CD8-positive, alpha-beta T cell (primary cell): ENCODE measurements at regions of chr9 and their contacts with region 1.

Region 1: DNA sequence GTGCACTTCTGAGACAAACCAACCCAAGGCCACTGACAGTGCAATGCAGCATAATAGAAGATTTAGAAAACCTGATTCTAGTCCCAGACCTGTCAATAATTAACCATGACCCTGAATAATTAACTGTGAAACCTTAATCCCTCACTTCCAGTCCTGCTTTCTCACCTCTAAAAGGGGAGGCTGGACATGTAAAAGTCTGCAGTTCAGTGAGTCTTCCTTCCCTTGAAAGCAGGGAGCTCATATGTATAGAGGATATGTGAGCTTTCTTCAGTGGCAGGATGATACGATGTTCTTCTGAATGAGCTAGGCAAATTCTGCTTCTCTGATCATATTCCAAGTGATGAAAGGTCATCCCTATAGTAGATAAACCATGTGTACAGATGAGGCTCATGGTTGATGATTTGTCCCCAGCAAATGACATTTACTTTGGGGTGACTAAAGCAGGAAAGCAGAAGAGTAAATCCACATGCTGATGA is 2.9 kb downstream of the KCNV2 start:
- DNase-seq: no peak
- ATAC-seq: no peak
- H3K4me3 ChIP-seq: no peak overlapping the region
- H3K4me3 Mint-ChIP-seq: no peak overlapping the region
- H3K27ac ChIP-seq: no peak overlapping the region
- H3K27ac Mint-ChIP-seq: no peak overlapping the region
- H3K4me1 ChIP-seq: no peaks in the 10 kb centered on the region
- H3K4me1 Mint-ChIP-seq: no peaks in the 10 kb centered on the region
- H3K27me3 ChIP-seq: no peaks in the 10 kb centered on the region
- H3K27me3 Mint-ChIP-seq: no peaks in the 10 kb centered on the region
- CTCF ChIP-seq: no peak

Region 2: GRCh38 chr9:2610985-2611384 is 109.2 kb before region 1 on chr9:
- CTCF ChIA-PET with region 1: no interaction called
- POLR2A ChIA-PET with region 1: no interaction called
- intact Hi-C with region 1: no loop called
- DNase-seq: no peak
- ATAC-seq: no peak
- H3K4me3 ChIP-seq: no peak overlapping the region
- H3K4me3 Mint-ChIP-seq: no peak overlapping the region
- H3K27ac ChIP-seq: no peak overlapping the region
- H3K27ac Mint-ChIP-seq: no peak overlapping the region
- H3K4me1 ChIP-seq: no peaks in the 10 kb centered on the region
- H3K4me1 Mint-ChIP-seq: no peaks in the 10 kb centered on the region
- H3K27me3 ChIP-seq: no peaks in the 10 kb centered on the region
- H3K27me3 Mint-ChIP-seq: peaks cover 16% of the 10 kb centered on the region
- CTCF ChIP-seq: no peak

Region 3: GRCh38 chr9:2745560-2746380 is 25.6 kb after region 1 on chr9:
- CTCF ChIA-PET with region 1: no interaction called
- POLR2A ChIA-PET with region 1: no interaction called
- intact Hi-C with region 1: loop called in 1 of 2 experiments (anchors 1 kb)
- DNase-seq: no peak
- ATAC-seq: no peak
- H3K4me3 ChIP-seq: no peak overlapping the region
- H3K4me3 Mint-ChIP-seq: no peak overlapping the region
- H3K27ac ChIP-seq: no peak overlapping the region
- H3K27ac Mint-ChIP-seq: no peak overlapping the region
- H3K4me1 ChIP-seq: no peaks in the 10 kb centered on the region
- H3K4me1 Mint-ChIP-seq: peaks cover 4% of the 10 kb centered on the region
- H3K27me3 ChIP-seq: no peaks in the 10 kb centered on the region
- H3K27me3 Mint-ChIP-seq: no peaks in the 10 kb centered on the region
- CTCF ChIP-seq: no peak